ENCODE measurements at regions of chr15 and their contacts with region 1.

Region 1: DNA sequence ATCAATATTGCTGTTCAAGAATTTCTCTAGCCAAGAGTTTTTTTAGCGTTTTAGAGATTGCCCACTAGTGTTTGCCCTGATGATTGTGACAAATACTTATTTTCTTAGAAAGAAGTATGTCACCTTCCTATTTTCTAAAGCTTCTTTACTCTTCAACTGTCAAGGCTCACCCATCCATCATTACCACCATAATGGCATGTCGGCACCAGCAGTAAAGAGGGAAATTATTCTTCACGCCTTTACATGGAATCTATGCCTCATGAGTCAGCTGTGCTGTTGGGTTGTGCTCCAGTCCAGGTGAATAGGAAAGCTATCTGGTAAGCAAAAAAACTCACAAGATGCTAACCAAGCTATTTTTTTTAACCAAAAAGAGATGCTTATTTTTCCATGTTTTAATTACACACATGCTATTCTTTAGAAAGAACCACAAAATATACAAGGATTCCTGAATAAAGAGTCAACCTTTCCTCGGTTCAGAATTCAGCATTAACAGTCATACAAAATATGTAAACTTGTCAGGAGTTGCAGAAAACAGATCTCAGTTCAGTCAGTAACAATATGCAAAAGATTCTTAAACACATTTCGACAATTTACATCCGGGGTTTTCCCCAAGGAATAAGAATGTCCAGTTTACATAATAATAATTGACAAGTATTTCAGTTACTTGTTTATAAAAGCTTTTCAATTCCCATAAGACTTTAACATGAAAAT is 128.0 kb downstream of the ATP8B4 start:
- DNase-seq: no peak
- ATAC-seq: no peak
- H3K4me3 ChIP-seq: no peak overlapping the region
- H3K27ac ChIP-seq: peak overlapping the region in 1 of 2 donors; percentile 93
- H3K4me1 ChIP-seq: peaks cover 3% of the 10 kb centered on the region in 2 donors
- H3K27me3 ChIP-seq: no peaks in the 10 kb centered on the region

Region 2: GRCh38 chr15:49656707-49657106 is 334.3 kb before region 1 on chr15:
- intact Hi-C with region 1: no loop called
- DNase-seq: no peak
- ATAC-seq: no peak
- H3K4me3 ChIP-seq: no peak overlapping the region
- H3K27ac ChIP-seq: no peak overlapping the region
- H3K4me1 ChIP-seq: no peaks in the 10 kb centered on the region
- H3K27me3 ChIP-seq: no peaks in the 10 kb centered on the region

Region 3: DNA sequence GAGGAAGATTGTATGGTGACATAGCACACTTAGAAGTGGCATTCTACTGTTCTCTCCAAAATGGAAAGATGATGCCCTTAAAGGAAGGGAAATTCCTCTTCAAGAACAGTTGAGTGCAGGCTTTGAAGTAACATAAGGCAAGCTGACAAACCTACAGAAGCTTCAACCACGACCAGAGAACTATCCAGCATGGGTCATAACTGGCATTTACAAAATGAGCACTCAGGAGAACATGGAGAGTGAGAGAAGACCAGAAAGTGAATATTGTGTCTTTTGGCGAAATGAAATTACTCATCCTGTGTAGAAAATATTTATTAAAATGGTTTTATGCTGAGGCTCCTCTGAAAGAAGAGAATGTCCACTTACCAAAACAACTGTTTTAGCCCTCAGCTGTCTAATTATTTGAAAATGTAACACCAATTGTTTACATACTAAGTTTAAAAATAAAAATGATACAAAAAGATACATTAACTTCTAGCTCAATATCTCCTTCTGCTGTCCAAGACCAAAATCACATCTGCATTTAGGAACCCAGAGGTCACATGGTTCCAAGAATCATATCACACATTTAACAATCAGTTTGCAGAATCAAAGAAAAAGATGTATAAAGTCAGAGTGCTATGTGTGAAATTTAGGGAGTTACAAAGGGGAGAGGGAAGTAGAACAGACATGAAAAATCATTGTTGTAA is 88.8 kb before region 1 on chr15:
- intact Hi-C with region 1: loop called in 1 of 2 experiments (anchors 5 kb)
- DNase-seq: no peak
- ATAC-seq: peak; percentile 62
- H3K4me3 ChIP-seq: no peak overlapping the region
- H3K27ac ChIP-seq: peak overlapping the region; percentile 28 to 69
- H3K4me1 ChIP-seq: peaks cover 0 to 5% of the 10 kb centered on the region in 2 donors
- H3K27me3 ChIP-seq: no peaks in the 10 kb centered on the region